Activated naive CD4-positive, alpha-beta T cell treated with anti-CD3 and anti-CD28 coated beads for 36 hours (primary cell): ENCODE measurements at regions of chr1 and their contacts with region 1.

Region 1: GRCh38 chr1:174769961-174770549 is 229.7 kb upstream of the CACYBP start:
- DNase-seq: no peak
- H3K4me3 Mint-ChIP-seq: no peak overlapping the region
- H3K27ac Mint-ChIP-seq: no peak overlapping the region
- H3K4me1 Mint-ChIP-seq: peaks cover 6% of the 10 kb centered on the region
- H3K27me3 Mint-ChIP-seq: no peaks in the 10 kb centered on the region

Region 2: DNA sequence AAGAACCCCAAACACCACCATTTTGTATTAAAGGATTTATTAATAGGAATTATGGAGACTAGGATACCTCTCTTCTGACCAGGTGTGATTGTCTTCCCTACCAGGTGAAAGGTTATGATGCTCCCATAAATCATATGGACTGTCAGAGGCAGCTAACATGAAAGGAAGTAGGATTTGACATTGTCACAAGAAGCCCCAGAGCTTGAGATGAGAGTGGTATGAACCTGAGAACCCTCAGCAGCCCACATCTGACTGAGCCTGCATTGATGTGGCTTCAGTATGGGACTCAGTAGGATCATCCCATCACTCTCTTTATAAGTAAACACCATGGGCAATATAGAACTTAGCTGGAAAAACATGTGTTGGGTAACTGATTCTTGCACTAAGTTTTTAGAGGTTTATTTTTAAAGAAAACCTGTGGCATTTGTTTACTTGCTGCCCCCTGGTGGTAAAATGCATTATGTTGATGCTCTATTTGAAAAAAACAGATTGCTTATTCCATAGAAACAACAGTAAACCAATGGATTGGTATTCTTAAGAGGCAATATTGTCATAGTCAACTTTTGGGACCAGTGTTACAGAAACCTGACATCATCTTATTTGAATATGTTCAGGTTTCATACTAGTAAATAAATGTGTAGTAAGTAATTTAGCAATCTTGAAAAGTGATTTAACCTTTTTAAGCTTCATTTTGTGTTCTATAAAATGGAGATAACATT is 213.1 kb after region 1 on chr1:
- CTCF ChIA-PET with region 1: interaction called, 6 read pairs
- intact Hi-C with region 1: loop called (anchors 1 kb)
- DNase-seq: peak; percentile 56
- H3K4me3 Mint-ChIP-seq: no peak overlapping the region
- H3K27ac Mint-ChIP-seq: no peak overlapping the region
- H3K4me1 Mint-ChIP-seq: peaks cover 18% of the 10 kb centered on the region
- H3K27me3 Mint-ChIP-seq: no peaks in the 10 kb centered on the region

Region 3: DNA sequence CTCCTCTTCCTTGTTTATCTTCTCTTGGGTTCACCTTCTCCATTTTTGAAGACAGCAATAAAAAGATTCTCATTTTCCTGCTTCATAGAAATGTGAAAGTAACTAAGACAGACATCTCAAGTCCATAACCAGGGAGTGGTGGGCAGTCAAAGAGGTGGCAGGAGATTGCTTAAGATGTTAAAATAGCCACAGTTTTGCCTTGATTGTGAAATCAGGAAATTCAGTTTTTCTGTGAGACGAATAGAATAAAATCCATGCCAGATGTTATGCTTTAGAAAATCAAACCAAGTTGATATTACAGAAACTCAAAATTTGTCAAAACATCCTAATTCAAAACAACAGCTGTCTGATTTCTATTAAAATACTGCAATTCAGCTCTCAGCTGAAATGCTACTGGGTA is 354.8 kb after region 1 on chr1:
- CTCF ChIA-PET with region 1: interaction called, 3 read pairs
- intact Hi-C with region 1: loop called (anchors 1 kb)
- DNase-seq: no peak
- H3K4me3 Mint-ChIP-seq: no peak overlapping the region
- H3K27ac Mint-ChIP-seq: no peak overlapping the region
- H3K4me1 Mint-ChIP-seq: no peaks in the 10 kb centered on the region
- H3K27me3 Mint-ChIP-seq: no peaks in the 10 kb centered on the region